ENCODE measurements at regions of chr12 and their contacts with region 1.

Region 1: DNA sequence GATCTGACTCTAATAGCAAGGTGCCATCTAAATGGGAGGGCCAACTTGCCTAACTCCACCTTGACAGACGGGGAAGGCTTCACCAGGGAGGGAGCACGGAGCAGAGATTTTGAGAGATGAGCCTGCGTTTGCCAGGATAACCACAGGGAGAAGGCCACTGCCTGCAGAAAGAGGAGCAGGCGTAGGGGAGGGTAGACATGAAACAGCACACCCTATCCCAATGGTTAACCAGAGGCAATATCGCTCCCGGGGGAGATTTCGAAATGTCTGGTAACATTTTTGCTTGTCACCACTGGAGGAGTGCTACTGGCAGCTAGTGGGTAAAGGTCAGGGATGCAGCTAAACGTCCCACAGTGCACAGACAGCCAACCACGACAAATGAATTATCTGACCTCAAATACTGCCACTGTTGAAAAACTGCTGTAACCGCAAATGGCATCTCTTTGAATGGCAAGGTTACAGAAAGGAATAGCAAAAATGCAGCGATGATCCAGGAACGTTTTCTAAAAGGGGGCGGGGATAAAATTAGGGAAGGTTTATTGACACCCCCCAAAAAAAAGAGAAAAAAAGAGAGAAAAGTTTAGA is 126.0 kb upstream of the ATF7IP start:
- DNase-seq: peak; percentile 93
- H3K4me3 ChIP-seq: peak overlapping the region; percentile 28
- H3K27ac ChIP-seq: peak overlapping the region; percentile 60
- H3K4me1 ChIP-seq: peaks cover 16% of the 10 kb centered on the region
- H3K27me3 ChIP-seq: no peaks in the 10 kb centered on the region
- CTCF ChIP-seq: peak; percentile 31

Region 2: DNA sequence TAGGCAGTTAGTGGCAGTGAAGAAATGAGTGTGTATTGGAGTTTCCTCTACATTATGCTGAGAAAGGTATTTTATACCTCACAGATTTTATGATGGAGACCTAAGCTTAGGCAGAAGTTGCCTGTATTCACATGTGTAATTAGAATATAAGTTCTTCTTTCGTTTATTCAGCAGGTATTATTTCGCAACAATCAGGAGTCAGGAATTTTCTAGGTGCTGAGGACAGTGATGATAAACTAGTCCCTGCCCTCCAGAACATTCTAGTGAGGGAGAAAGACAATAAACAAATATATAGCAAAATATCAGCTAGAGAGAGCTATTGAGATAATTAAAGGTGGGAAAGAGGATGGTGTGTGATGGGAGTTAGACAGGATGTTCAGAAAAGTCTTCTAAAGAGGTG is 603.7 kb before region 1 on chr12:
- CTCF ChIA-PET with region 1: no interaction called
- POLR2A ChIA-PET with region 1: no interaction called
- intact Hi-C with region 1: no loop called
- DNase-seq: no peak
- H3K4me3 ChIP-seq: no peak overlapping the region
- H3K27ac ChIP-seq: no peak overlapping the region
- H3K4me1 ChIP-seq: no peaks in the 10 kb centered on the region
- H3K27me3 ChIP-seq: peaks cover 27% of the 10 kb centered on the region
- CTCF ChIP-seq: no peak

Region 3: GRCh38 chr12:13959131-13959723 is 280.2 kb before region 1 on chr12:
- CTCF ChIA-PET with region 1: no interaction called
- POLR2A ChIA-PET with region 1: no interaction called
- intact Hi-C with region 1: no loop called
- DNase-seq: no peak
- H3K4me3 ChIP-seq: no peak overlapping the region
- H3K27ac ChIP-seq: no peak overlapping the region
- H3K4me1 ChIP-seq: no peaks in the 10 kb centered on the region
- H3K27me3 ChIP-seq: peaks cover 86% of the 10 kb centered on the region
- CTCF ChIP-seq: no peak

Region 4: DNA sequence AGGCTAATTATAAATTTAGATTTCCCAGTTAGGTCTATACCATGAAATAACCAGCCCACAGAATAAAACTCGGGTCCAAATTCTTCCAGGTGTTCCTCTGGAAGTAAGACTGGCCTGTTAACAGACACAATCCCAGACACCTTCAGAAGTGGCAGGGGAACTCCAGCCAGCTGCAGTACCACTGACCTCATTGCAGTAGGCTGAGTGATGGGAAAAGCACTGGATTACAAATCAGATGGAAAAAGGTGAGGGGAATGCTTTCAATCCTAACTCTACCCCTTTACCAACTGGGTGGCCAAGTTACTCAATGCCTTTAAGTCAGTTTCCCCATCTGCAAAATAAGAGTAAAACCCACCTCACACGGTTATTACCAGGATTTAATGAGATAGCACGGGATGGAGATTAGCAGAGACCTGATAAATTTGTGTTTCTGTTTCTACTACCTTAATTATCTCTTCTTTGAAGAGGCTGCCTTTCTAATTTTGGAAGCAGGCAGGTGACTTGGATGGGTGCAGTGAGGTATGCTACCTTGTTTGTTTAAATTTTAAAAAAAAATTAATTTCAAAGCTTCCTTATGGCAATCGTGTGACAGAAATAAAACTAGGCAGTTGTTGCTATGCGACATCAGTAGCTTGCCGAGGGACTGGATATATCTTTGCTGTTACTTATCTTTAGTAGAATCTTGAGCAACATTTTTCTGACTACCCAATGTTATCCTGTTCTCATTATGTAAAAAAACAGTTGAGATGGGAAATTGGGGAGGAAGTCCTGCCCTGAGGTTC is 90.8 kb before region 1 on chr12:
- CTCF ChIA-PET with region 1: no interaction called
- POLR2A ChIA-PET with region 1: no interaction called
- intact Hi-C with region 1: no loop called
- DNase-seq: no peak
- H3K4me3 ChIP-seq: no peak overlapping the region
- H3K27ac ChIP-seq: no peak overlapping the region
- H3K4me1 ChIP-seq: no peaks in the 10 kb centered on the region
- H3K27me3 ChIP-seq: peaks cover 13% of the 10 kb centered on the region
- CTCF ChIP-seq: no peak

Region 5: DNA sequence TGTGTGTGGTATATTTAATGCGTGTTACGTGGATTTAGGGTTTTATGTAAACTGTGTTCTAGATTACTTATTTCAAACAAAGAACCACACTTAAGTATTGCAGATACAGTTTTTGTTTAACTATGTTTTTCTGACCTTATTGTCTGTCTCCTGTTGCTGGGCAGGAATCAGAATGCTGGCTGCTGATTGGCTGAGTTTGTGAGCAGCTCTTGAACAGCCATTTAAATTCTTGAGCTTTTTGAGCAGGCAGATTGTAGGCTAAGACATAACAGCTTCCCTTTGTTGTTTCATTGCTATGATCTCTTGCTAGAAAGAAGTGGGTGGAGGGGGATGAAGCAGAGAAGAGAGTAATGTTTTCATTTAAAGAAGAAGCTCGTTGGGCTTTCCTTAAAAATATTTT is 178.3 kb after region 1 on chr12:
- CTCF ChIA-PET with region 1: interaction called, 15 read pairs
- POLR2A ChIA-PET with region 1: no interaction called
- intact Hi-C with region 1: loop called (anchors 1 kb)
- DNase-seq: peak; percentile 90
- H3K4me3 ChIP-seq: peak overlapping the region; percentile 34
- H3K27ac ChIP-seq: peak overlapping the region; percentile 78
- H3K4me1 ChIP-seq: peaks cover 50% of the 10 kb centered on the region
- H3K27me3 ChIP-seq: no peaks in the 10 kb centered on the region
- CTCF ChIP-seq: no peak

Region 6: DNA sequence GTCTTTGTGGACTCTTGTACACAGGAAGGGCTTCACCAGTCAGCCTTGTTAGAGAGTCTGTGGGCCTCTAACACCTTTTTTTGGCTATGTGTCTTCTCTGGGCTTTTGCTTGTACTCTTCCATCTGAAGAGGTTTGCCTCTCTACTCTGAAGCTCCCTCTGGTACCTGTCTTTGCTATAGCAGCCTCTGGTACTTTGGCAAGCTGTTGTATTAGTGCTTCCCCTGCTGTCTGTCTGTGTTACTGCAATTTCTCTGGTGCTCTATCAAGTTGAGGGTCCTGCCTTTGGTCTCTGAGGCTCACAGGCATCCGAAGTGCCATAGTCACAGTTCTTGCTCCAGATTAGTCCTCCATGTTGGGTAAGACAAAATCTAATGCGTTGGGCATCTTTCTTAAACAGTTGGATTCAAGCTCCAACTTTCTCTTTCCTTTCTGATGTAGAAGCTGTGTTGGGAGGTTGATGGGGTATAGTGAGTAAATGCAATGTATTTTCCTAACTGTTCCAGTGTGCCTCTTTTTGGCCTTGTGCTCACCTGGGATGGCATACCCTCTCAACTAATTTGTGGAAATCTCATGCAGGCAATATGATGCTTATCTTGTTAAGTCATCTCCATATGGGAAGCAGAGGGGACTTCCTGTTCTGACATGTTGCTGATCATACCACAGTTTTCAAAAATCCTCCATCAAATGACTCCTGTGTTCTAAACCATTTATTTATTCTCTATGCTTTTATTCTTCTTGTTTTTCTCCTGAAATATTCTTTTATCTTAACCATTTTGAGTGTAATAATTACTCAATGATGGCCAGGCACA is 214.9 kb after region 1 on chr12:
- CTCF ChIA-PET with region 1: interaction called, 12 read pairs
- POLR2A ChIA-PET with region 1: no interaction called
- intact Hi-C with region 1: loop called (anchors 1 kb)
- DNase-seq: peak; percentile 73
- H3K4me3 ChIP-seq: no peak overlapping the region
- H3K27ac ChIP-seq: no peak overlapping the region
- H3K4me1 ChIP-seq: no peaks in the 10 kb centered on the region
- H3K27me3 ChIP-seq: no peaks in the 10 kb centered on the region
- CTCF ChIP-seq: peak; percentile 76

Region 7: GRCh38 chr12:14514154-14514842 is 274.9 kb after region 1 on chr12:
- CTCF ChIA-PET with region 1: interaction called, 3 read pairs
- POLR2A ChIA-PET with region 1: no interaction called
- intact Hi-C with region 1: loop called (anchors 5 kb)
- DNase-seq: peak; percentile 89
- H3K4me3 ChIP-seq: no peak overlapping the region
- H3K27ac ChIP-seq: no peak overlapping the region
- H3K4me1 ChIP-seq: peaks cover 13% of the 10 kb centered on the region
- H3K27me3 ChIP-seq: no peaks in the 10 kb centered on the region
- CTCF ChIP-seq: peak; percentile 78

Region 8: GRCh38 chr12:14618983-14619382 is 379.5 kb after region 1 on chr12:
- CTCF ChIA-PET with region 1: interaction called, 11 read pairs
- POLR2A ChIA-PET with region 1: no interaction called
- intact Hi-C with region 1: loop called (anchors 1 kb)
- DNase-seq: peak; percentile 54
- H3K4me3 ChIP-seq: no peak overlapping the region
- H3K27ac ChIP-seq: no peak overlapping the region
- H3K4me1 ChIP-seq: peaks cover 4% of the 10 kb centered on the region
- H3K27me3 ChIP-seq: no peaks in the 10 kb centered on the region
- CTCF ChIP-seq: peak; percentile 61

Region 9: GRCh38 chr12:14664510-14664909 is 425.1 kb after region 1 on chr12:
- CTCF ChIA-PET with region 1: no interaction called
- POLR2A ChIA-PET with region 1: no interaction called
- intact Hi-C with region 1: loop called (anchors 2 kb)
- DNase-seq: peak; percentile 65
- H3K4me3 ChIP-seq: no peak overlapping the region
- H3K27ac ChIP-seq: no peak overlapping the region
- H3K4me1 ChIP-seq: no peaks in the 10 kb centered on the region
- H3K27me3 ChIP-seq: no peaks in the 10 kb centered on the region
- CTCF ChIP-seq: peak; percentile 78

Region 10: DNA sequence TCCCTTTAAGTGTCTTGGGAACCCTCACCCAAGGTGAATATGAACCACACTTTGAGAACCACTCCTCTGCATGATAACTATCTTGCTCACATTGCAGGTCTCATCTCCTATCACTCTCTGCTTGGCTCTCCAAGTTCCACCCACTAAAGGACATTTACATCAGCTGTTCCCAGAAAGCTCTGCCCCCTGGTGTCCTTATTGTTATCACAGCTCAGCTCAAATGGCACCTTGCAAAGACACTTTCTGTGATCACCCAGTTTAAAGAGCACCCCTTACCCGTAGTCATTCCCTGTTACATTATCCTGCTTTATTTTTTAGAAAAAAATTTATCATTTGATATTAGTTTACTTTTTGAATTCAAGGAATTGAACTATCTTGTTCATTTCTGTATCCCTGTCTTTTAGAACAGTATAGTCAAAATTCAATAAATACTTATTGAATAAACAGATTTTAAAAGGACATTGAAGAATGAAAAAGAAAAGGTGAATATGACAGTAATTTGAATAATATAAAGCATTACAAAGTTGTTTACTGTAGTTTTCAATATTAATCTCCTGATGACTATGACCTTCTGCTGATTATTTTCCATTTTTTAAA is 477.5 kb after region 1 on chr12:
- CTCF ChIA-PET with region 1: interaction called, 6 read pairs
- POLR2A ChIA-PET with region 1: no interaction called
- intact Hi-C with region 1: loop called (anchors 2 kb)
- DNase-seq: peak; percentile 76
- H3K4me3 ChIP-seq: no peak overlapping the region
- H3K27ac ChIP-seq: no peak overlapping the region
- H3K4me1 ChIP-seq: no peaks in the 10 kb centered on the region
- H3K27me3 ChIP-seq: no peaks in the 10 kb centered on the region
- CTCF ChIP-seq: peak; percentile 72

Region 11: GRCh38 chr12:14810953-14811483 is 571.6 kb after region 1 on chr12:
- CTCF ChIA-PET with region 1: no interaction called
- POLR2A ChIA-PET with region 1: no interaction called
- intact Hi-C with region 1: no loop called
- DNase-seq: peak; percentile 9
- H3K4me3 ChIP-seq: no peak overlapping the region
- H3K27ac ChIP-seq: no peak overlapping the region
- H3K4me1 ChIP-seq: no peaks in the 10 kb centered on the region
- H3K27me3 ChIP-seq: no peaks in the 10 kb centered on the region
- CTCF ChIP-seq: 0 out of 2 replicates have a peak, but pooled peaks have one; percentile 32

Measured in A673 (cell line).